Activated T-helper 1 cell treated with anti-CD3 and anti-CD28 coated beads, Interleukin-12 subunit alpha, Interleukin-12 subunit beta, Interleukin-2, Interleukin-4 antibody, amounts not matched to agents 30 ng/mL and 10 ng/mL and 1 ng/mL, durations not matched to agents 14 hours and 24 hours and 36 hours (primary cell): ENCODE measurements at regions of chr2 and their contacts with region 1.

Region 1: GRCh38 chr2:229825476-229825875 is 96.3 kb downstream of the TRIP12 start:
- DNase-seq: no peak
- H3K4me3 Mint-ChIP-seq: no peak overlapping the region
- H3K27ac Mint-ChIP-seq: no peak overlapping the region
- H3K4me1 Mint-ChIP-seq: peaks cover 37% of the 10 kb centered on the region
- H3K27me3 Mint-ChIP-seq: no peaks in the 10 kb centered on the region

Region 2: GRCh38 chr2:229800997-229801754 is 24.3 kb before region 1 on chr2:
- intact Hi-C with region 1: loop called (anchors 2 kb)
- DNase-seq: peak; percentile 50
- H3K4me3 Mint-ChIP-seq: no peak overlapping the region
- H3K27ac Mint-ChIP-seq: no peak overlapping the region
- H3K4me1 Mint-ChIP-seq: no peaks in the 10 kb centered on the region
- H3K27me3 Mint-ChIP-seq: no peaks in the 10 kb centered on the region

Region 3: DNA sequence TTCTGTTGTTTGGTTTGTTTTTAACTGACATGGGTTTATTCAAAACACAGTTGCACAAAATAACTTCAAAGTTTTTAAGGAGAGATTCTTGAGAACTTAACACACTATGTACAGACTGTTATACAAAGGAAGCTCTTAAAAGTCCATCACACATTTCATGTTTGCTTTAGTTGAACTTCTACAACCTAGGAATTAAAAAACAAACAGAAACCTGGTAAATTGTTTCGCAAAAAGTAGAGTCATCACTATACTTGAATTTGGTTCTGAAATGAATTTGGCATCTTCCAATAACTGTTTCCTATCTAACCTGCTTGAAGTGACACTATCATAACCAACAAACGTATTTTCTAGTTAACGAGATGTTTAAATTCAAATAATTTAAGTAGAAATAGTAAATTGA is 74.5 kb after region 1 on chr2:
- intact Hi-C with region 1: loop called (anchors 1 kb)
- DNase-seq: no peak
- H3K4me3 Mint-ChIP-seq: no peak overlapping the region
- H3K27ac Mint-ChIP-seq: no peak overlapping the region
- H3K4me1 Mint-ChIP-seq: peaks cover 43% of the 10 kb centered on the region
- H3K27me3 Mint-ChIP-seq: no peaks in the 10 kb centered on the region

Region 4: GRCh38 chr2:230225486-230225885 is 400.0 kb after region 1 on chr2 and contains the start of gene SP140:
- intact Hi-C with region 1: loop called (anchors 2 kb)
- DNase-seq: peak; percentile 80
- H3K4me3 Mint-ChIP-seq: peak within 1 kb of the TSS; percentile 91
- H3K27ac Mint-ChIP-seq: peak within 1 kb of the TSS; percentile 98
- H3K4me1 Mint-ChIP-seq: peaks cover 63% of the 10 kb centered on the region
- H3K27me3 Mint-ChIP-seq: no peaks in the 10 kb centered on the region
- total RNA-seq, gene SP140: 235 and 243 TPM in 2 replicates